ENCODE measurements at regions of chr6 and their contacts with region 1.

Region 1: DNA sequence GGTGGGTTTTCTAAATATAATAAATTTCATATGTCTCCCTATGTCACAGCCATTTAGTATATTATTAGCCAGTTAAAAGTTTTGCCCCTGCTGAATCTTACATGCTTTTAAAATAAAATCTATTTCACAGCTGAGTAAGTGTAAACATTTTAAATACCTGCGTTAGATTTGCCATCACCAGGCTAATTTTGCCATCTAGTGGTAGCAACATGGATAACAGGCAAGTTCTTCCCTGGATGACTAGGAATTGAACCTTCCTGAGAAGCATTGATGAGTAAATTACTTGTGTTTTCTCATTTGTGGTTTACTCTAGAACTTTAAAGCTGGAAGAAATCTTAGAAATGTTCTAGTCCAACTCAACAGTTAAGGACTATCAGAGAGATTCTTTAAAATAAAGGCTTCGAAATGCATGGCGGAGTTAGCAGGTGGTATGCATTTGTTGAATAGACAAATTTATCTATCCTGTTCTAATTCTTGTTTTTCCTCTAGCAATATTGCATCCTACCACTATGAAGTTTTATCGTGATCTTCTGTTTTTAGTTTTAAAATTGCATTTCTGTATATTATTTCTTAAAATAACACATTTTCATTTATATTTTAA is 2.6 kb downstream of the PRSS35 start:
- DNase-seq: peak; percentile 80
- ATAC-seq: 0 out of 2 replicates have a peak, but pooled peaks have one; percentile 30
- H3K4me3 ChIP-seq: no peak overlapping the region
- H3K27ac ChIP-seq: no peak overlapping the region
- H3K4me1 ChIP-seq: no peaks in the 10 kb centered on the region; the same call in 1 of the 2 replicates
- H3K27me3 ChIP-seq: no peaks in the 10 kb centered on the region
- CTCF ChIP-seq: peak; percentile 96
- POLR2A ChIP-seq: no peak
- RAD21 ChIP-seq: peak; percentile 93

Region 2: GRCh38 chr6:82247634-82248232 is 1267.2 kb before region 1 on chr6 and contains the start of gene IBTK:
- CTCF ChIA-PET with region 1: no interaction called
- POLR2A ChIA-PET with region 1: no interaction called
- dilution Hi-C with region 1: no loop called
- in situ Hi-C with region 1: loop called (anchors 25 kb)
- intact Hi-C with region 1: loop called (anchors 5 kb)
- DNase-seq: peak; percentile 88
- ATAC-seq: peak; percentile 86
- H3K4me3 ChIP-seq: peak within 1 kb of the TSS; percentile 80
- H3K27ac ChIP-seq: peak within 1 kb of the TSS; percentile 91
- H3K4me1 ChIP-seq: peaks cover 10% of the 10 kb centered on the region
- H3K27me3 ChIP-seq: no peaks in the 10 kb centered on the region
- CTCF ChIP-seq: no peak
- POLR2A ChIP-seq: peak; percentile 88
- RAD21 ChIP-seq: no peak
- total RNA-seq, gene IBTK: 45.0 and 60.5 TPM in 2 replicates

Region 3: GRCh38 chr6:82363351-82364086 is 1151.4 kb before region 1 on chr6 and contains the start of gene TPBG:
- CTCF ChIA-PET with region 1: no interaction called
- POLR2A ChIA-PET with region 1: no interaction called
- dilution Hi-C with region 1: no loop called
- in situ Hi-C with region 1: no loop called
- intact Hi-C with region 1: loop called (anchors 10 kb)
- DNase-seq: peak; percentile 82
- ATAC-seq: peak; percentile 67
- H3K4me3 ChIP-seq: peak within 1 kb of the TSS; percentile 68
- H3K27ac ChIP-seq: peak within 1 kb of the TSS; percentile 98
- H3K4me1 ChIP-seq: peaks cover 8% of the 10 kb centered on the region
- H3K27me3 ChIP-seq: no peaks in the 10 kb centered on the region
- CTCF ChIP-seq: peak; percentile 34
- POLR2A ChIP-seq: peak; percentile 92
- RAD21 ChIP-seq: peak; percentile 23; the same call in 1 of the 2 replicates
- total RNA-seq, gene TPBG: 19.7 and 20.0 TPM in 2 replicates

Region 4: DNA sequence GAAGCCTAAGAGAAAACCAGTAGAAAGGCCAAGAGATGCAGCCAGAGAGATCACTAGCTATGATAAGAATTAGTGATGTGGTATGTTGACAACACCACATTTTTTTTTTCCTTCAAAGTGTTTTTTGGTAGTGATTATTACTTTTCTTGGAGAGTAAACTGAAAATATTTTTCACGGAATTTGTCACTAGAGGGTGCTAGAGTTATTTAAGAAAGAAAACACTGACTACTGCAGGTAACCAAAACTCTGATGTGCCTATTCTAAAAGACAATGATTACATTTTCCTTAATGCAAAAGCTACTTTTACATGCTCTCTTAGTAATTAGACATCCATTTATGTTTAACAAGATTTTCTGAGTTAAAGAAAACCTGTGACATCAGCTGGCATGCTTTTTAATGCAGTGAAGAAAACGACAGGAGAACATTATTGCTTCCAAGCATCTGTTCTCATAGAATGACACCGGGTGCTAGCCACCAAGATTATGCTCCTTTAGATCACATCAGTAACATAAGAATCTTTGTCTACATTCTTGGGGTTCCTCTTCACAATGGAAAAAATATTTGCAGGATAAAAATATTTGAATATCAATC is 293.0 kb before region 1 on chr6:
- CTCF ChIA-PET with region 1: interaction called, 47 read pairs
- POLR2A ChIA-PET with region 1: interaction called, 4 read pairs
- dilution Hi-C with region 1: loop called (anchors 25 kb)
- in situ Hi-C with region 1: loop called (anchors 5 kb)
- intact Hi-C with region 1: loop called (anchors 1 kb)
- DNase-seq: peak; percentile 54
- ATAC-seq: 0 out of 2 replicates have a peak, but pooled peaks have one; percentile 19
- H3K4me3 ChIP-seq: no peak overlapping the region
- H3K27ac ChIP-seq: no peak overlapping the region
- H3K4me1 ChIP-seq: peaks cover 5% of the 10 kb centered on the region
- H3K27me3 ChIP-seq: no peaks in the 10 kb centered on the region
- CTCF ChIP-seq: peak; percentile 63
- POLR2A ChIP-seq: peak; percentile 49
- RAD21 ChIP-seq: peak; percentile 67

Region 5: DNA sequence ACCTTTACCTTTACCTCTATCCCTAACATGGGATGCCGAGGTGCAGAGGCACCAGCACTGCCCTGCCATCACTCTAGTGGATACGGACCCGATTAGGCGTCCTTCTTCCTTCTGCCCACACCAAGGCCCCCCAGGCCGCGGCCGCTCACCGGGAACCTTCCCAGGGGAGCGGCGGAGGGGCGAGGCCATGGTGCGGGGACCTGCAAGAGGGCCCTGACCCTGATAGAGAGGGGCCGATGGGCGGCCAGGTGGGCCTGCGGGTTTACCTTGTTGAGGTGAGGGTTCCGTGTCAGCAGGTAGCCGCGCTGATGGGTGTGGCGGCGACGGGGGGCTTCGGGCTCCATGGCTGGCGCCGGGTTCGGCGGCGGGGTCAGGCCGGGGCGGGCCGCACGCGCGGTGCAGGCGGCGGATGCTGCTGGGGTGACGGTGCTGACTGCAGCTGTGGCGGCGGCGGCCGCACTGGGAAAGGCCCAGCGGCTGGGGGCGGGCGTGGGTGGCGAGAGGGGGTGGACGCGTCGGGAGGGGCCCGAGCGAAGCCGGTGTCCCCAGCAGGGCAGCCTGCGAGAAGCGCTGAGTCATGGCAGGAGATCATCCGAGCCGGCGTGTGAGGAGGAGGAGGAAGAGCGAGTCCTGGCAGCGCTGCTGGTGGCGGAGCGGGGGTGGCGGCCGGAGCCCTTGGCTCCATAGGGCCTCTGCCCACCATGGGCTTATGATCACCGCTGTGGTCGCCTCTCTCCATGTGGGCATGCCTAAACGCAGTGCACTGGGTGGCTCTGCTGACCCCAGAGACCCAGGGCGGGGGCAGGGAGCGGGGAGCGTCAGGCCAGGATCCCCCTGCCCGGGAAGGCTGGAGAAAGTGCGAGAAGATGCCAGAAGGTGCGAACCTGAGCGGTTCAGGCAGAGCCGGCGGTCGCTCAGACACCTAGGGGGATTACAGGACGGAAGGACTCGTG is 84.1 kb before region 1 on chr6 and contains the start of gene ME1:
- CTCF ChIA-PET with region 1: no interaction called
- POLR2A ChIA-PET with region 1: no interaction called
- dilution Hi-C with region 1: no loop called
- in situ Hi-C with region 1: no loop called
- intact Hi-C with region 1: loop called (anchors 5 kb)
- DNase-seq: peak; percentile 86
- ATAC-seq: peak; percentile 94
- H3K4me3 ChIP-seq: peak within 1 kb of the TSS; percentile 97
- H3K27ac ChIP-seq: peak within 1 kb of the TSS; percentile 74
- H3K4me1 ChIP-seq: peaks cover 7% of the 10 kb centered on the region
- H3K27me3 ChIP-seq: no peaks in the 10 kb centered on the region
- CTCF ChIP-seq: no peak
- POLR2A ChIP-seq: peak; percentile 48
- RAD21 ChIP-seq: no peak
- total RNA-seq, gene ME1: 24.4 and 32.2 TPM in 2 replicates

Measured in IMR-90 (cell line).